Activated CD4-positive, alpha-beta T cell treated with anti-CD3 and anti-CD28 coated beads for 36 hours (primary cell): ENCODE measurements at regions of chrX and their contacts with region 1.

Region 1: DNA sequence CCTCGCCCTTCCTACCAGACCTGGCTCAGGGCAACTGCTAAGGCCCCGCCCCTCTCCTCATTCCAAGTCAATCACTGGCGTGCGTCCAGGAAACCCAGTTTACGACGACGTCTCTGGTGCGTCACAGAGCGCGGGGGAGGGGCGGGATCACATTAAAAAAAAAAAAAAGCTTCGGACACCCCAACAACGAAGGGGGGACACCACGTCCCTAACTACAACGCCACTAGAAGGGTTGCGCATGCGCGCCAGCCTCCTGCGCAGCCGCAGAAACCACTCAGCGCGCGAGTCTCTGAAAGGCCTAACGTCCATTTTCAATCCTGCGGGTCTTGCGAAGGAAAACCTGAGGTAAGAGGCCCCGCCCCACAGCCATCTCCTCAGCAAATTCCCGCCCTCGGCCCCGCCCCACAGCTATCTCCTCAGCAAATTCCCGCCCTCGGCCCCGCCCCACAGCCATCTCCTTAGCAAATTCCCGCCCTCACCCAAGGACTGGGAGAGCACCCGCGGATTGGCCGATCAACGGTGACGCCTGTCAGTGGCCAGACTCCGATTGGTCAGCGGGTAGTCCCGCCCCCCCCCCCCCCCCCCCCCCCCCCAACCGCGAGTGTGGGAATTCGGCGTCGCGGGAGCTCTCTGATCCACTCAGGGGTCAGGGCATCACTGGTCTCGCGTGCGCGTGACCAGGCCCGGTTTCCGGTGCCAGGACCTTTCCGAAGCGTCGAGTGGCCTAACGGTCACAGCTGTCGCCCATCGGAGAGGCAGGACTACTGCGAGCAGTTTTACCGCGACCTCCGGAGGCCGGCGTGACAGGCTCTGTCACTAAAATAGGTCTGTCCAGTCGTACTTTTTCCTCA is at the start of gene SCML1:
- DNase-seq: peak; percentile 95
- ATAC-seq: peak; percentile 79
- H3K4me3 Mint-ChIP-seq: peak within 1 kb of the TSS; percentile 81
- H3K27ac Mint-ChIP-seq: peak within 1 kb of the TSS; percentile 95
- H3K4me1 Mint-ChIP-seq: peaks cover 25% of the 10 kb centered on the region
- H3K27me3 Mint-ChIP-seq: peaks cover 5% of the 10 kb centered on the region
- total RNA-seq, gene SCML1: 7.3 TPM

Region 2: DNA sequence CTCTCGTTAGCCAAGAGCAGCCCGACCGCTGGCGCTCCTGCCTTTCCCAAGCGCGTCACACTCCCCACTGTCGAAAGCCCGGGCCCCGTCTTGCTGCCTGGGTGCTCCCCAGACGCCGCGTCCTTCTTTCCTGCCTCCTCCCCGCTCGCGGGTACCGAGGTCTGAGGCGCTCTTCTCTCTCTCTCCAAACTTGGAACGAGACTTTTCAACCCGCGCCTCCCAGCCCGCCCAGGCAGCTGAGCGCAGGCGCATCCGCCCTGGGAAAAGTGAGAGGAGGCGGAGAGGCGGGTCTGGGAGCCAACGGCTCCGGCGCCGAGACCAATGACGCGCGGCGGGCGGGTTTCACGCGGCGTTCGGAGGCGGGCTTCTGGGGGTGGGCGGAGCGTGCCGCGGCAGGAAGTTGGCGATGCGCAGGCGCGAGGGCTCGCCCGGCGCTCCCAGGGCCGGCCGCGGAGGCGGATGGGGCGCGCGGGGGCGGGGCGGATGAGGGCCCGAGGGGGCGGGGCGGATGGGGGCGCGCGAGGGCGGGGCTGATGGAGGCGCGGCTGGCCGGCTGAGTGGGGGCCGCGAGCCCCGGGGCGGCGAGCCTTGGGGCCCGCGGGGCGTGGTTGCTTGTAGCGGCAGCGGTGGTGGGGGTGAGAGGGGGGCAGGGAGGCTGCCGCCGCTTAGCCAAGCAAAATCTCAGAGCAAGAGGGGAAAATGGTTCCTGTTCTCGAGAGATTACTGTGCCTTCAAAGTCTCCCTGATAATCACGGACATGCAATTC is 866.8 kb before region 1 on chrX and contains the start of gene RBBP7:
- CTCF ChIA-PET with region 1: no interaction called
- POLR2A ChIA-PET with region 1: no interaction called
- intact Hi-C with region 1: loop called in 1 of 2 experiments (anchors 5 kb)
- DNase-seq: peak; percentile 93
- ATAC-seq: peak; percentile 84
- H3K4me3 Mint-ChIP-seq: peak within 1 kb of the TSS; percentile 93
- H3K27ac Mint-ChIP-seq: peak within 1 kb of the TSS; percentile 95
- H3K4me1 Mint-ChIP-seq: peaks cover 24% of the 10 kb centered on the region
- H3K27me3 Mint-ChIP-seq: peaks cover 2% of the 10 kb centered on the region
- total RNA-seq, gene RBBP7: 198 to 238 TPM

Region 3: GRCh38 chrX:17655211-17656034 is 81.7 kb before region 1 on chrX:
- CTCF ChIA-PET with region 1: no interaction called
- POLR2A ChIA-PET with region 1: no interaction called
- intact Hi-C with region 1: loop called in 1 of 2 experiments (anchors 5 kb)
- DNase-seq: peak; percentile 37
- ATAC-seq: peak; percentile 27
- H3K4me3 Mint-ChIP-seq: peak overlapping the region; percentile 80
- H3K27ac Mint-ChIP-seq: peak overlapping the region; percentile 84
- H3K4me1 Mint-ChIP-seq: peaks cover 22% of the 10 kb centered on the region
- H3K27me3 Mint-ChIP-seq: peaks cover 2% of the 10 kb centered on the region

Region 4: DNA sequence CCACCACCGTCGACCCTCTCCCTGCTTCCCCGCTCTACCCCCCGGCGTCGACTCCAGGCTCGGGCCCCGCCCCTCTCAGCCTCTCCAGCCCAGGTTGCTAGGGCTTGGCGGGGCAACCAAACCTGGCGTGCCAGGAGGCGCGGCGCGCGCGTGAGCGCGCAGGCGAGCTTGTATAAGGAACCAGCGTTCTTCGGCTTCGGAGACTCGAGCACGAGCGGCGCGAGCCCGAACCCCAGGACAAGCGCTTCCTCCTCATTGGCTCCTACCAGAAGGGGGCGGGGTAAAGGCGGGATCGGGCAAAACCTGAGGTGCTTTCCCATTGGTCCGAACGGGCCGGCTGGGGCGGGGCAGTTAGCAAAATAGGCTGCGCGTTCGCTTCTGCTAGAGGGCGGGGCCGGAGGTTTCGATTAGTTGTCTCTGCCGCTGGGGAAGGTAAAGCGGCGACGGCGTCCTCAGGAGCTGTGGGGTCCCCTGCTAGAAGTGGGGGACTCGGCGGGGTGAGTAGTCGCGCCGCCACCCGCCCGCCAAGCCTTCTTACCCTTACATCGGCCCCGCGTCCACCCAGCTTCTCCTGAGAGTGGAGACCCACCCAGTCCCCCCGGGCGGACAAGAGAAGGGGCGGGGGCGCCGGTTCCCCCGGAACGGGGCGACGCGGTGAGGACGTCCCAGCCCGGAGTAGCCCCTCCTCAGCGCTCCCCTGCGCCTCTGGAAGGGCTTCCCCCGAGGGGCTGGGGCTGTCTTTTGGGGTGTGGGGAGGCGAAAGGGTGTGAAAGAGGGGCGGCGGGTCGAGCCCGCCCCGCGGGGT is 688.3 kb after region 1 on chrX and contains the start of gene CDKL5:
- CTCF ChIA-PET with region 1: no interaction called
- POLR2A ChIA-PET with region 1: no interaction called
- intact Hi-C with region 1: loop called in 1 of 2 experiments (anchors 5 kb)
- DNase-seq: peak; percentile 97
- ATAC-seq: peak; percentile 96
- H3K4me3 Mint-ChIP-seq: peak within 1 kb of the TSS; percentile 79
- H3K27ac Mint-ChIP-seq: peak within 1 kb of the TSS; percentile 60
- H3K4me1 Mint-ChIP-seq: peaks cover 2% of the 10 kb centered on the region
- H3K27me3 Mint-ChIP-seq: peaks cover 2% of the 10 kb centered on the region
- total RNA-seq, gene CDKL5: 1.2 to 1.5 TPM

Region 5: GRCh38 chrX:18984381-18985185 is 1247.5 kb after region 1 on chrX:
- CTCF ChIA-PET with region 1: no interaction called
- POLR2A ChIA-PET with region 1: no interaction called
- intact Hi-C with region 1: loop called in 1 of 2 experiments (anchors 2 kb)
- DNase-seq: peak; percentile 91
- ATAC-seq: peak; percentile 90
- H3K4me3 Mint-ChIP-seq: peak overlapping the region; percentile 84
- H3K27ac Mint-ChIP-seq: peak overlapping the region; percentile 93
- H3K4me1 Mint-ChIP-seq: peaks cover 11% of the 10 kb centered on the region
- H3K27me3 Mint-ChIP-seq: no peaks in the 10 kb centered on the region

Region 6: GRCh38 chrX:19682712-19683331 is 1945.7 kb after region 1 on chrX:
- CTCF ChIA-PET with region 1: no interaction called
- POLR2A ChIA-PET with region 1: no interaction called
- intact Hi-C with region 1: loop called in 1 of 2 experiments (anchors 10 kb)
- DNase-seq: peak; percentile 87
- ATAC-seq: peak; percentile 82
- H3K4me3 Mint-ChIP-seq: peak overlapping the region; percentile 64
- H3K27ac Mint-ChIP-seq: peak overlapping the region; percentile 95
- H3K4me1 Mint-ChIP-seq: peaks cover 85% of the 10 kb centered on the region
- H3K27me3 Mint-ChIP-seq: no peaks in the 10 kb centered on the region